Endothelial cell of umbilical vein (primary cell): ENCODE measurements at regions of chr9 and their contacts with region 1.

Region 1: GRCh38 chr9:33489066-33489465 is 15.3 kb upstream of the NOL6 start:
- DNase-seq: no peak
- H3K4me3 ChIP-seq: no peak overlapping the region
- H3K27ac ChIP-seq: no peak overlapping the region
- H3K4me1 ChIP-seq: no peaks in the 10 kb centered on the region
- H3K27me3 ChIP-seq: no peaks in the 10 kb centered on the region
- CTCF ChIP-seq: no peak
- POLR2A ChIP-seq: no peak

Region 2: DNA sequence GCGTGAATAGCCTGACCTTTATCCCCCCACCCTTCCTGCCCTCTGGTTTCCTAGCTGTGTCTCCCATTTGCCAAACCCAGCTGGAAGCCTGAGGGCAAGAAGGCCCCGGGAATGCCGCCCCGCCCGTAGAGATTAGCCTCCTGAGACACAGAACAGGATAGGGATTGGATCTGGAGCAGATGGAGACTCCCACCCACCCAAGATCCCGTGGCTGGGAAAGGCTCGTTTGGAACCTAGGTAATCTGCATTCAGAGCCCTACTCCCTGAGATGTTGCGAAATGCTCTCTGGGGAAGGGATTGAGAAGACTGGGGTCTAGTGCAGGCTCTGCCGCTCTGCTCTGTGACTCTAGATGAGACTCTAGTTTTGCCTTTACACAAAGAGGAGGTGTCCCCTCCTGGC is 52.6 kb before region 1 on chr9:
- CTCF ChIA-PET with region 1: no interaction called
- POLR2A ChIA-PET with region 1: no interaction called
- dilution Hi-C with region 1: no loop called
- intact Hi-C with region 1: loop called (anchors 5 kb)
- DNase-seq: no peak
- H3K4me3 ChIP-seq: no peak overlapping the region
- H3K27ac ChIP-seq: no peak overlapping the region
- H3K4me1 ChIP-seq: peaks cover 3% of the 10 kb centered on the region
- H3K27me3 ChIP-seq: peaks cover 2 to 6% of the 10 kb centered on the region in 2 experiments
- CTCF ChIP-seq: no peak
- POLR2A ChIP-seq: no peak